ENCODE measurements at regions of chr20 and their contacts with region 1.

Region 1: GRCh38 chr20:38050686-38051085 is 17.1 kb downstream of the RPRD1B start:
- DNase-seq: no peak
- H3K4me3 ChIP-seq: no peak overlapping the region
- H3K27ac ChIP-seq: no peak overlapping the region
- H3K4me1 ChIP-seq: peaks cover 6% of the 10 kb centered on the region; the same call in 1 of the 2 replicates
- H3K27me3 ChIP-seq: no peaks in the 10 kb centered on the region
- CTCF ChIP-seq: no peak

Region 2: DNA sequence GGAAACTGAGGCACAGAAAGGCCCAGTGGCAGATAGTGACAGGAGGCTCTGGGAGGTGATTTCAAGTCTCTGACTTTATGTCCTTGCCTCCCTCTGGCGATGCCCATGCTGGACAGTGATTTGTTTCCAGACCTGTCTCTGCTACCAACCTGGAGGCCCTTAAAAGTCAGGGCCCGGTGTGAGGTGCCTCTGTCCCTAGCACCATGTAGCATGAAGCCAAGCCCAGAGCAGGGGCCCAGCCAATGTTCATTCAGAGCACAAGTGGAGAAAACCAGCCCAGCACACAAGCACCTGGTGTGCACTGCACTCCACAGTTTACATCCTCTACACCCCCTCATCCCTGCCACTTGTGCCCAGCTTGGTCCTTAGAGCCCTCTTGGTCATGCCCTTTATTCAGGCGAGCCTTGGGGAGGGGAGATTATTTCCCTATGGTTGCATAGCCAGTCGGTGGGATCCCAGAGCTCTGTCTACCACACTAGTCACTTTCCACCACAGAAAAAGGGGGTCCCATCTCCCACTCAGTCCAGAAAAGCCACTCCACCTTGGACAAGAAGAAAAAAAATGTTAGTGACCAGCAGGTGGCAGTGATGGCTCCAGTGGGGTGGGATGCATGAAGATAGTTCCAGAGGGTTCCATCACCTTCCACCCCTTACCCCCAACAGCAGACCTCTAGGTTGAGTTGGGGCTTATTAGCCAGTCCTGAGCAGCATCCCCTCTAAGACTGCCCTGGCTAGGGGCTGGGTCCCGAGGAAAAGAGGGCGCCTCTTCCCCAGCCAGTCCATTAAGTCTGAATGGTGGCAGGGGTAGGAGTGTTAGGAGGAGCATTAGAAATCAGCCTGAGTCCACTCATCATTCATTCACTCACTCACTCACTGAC is 178.9 kb after region 1 on chr20:
- CTCF ChIA-PET with region 1: no interaction called
- POLR2A ChIA-PET with region 1: no interaction called
- intact Hi-C with region 1: no loop called
- DNase-seq: peak in 1 of 2 experiments; percentile 26
- H3K4me3 ChIP-seq: no peak overlapping the region
- H3K27ac ChIP-seq: no peak overlapping the region
- H3K4me1 ChIP-seq: no peaks in the 10 kb centered on the region
- H3K27me3 ChIP-seq: peaks cover 3% of the 10 kb centered on the region; the same call in 1 of the 2 replicates
- CTCF ChIP-seq: peak; percentile 80

Region 3: GRCh38 chr20:38353323-38353722 is 302.6 kb after region 1 on chr20:
- CTCF ChIA-PET with region 1: no interaction called
- POLR2A ChIA-PET with region 1: interaction called, 18 read pairs
- intact Hi-C with region 1: no loop called
- DNase-seq: no peak
- H3K4me3 ChIP-seq: no peak overlapping the region
- H3K27ac ChIP-seq: no peak overlapping the region
- H3K4me1 ChIP-seq: no peaks in the 10 kb centered on the region
- H3K27me3 ChIP-seq: peaks cover 18% of the 10 kb centered on the region
- CTCF ChIP-seq: no peak

Measured in PC-9 (cell line).